Sciatic nerve (tissue), 2 donors: ENCODE measurements at regions of chr10 and their contacts with region 1.

Region 1: DNA sequence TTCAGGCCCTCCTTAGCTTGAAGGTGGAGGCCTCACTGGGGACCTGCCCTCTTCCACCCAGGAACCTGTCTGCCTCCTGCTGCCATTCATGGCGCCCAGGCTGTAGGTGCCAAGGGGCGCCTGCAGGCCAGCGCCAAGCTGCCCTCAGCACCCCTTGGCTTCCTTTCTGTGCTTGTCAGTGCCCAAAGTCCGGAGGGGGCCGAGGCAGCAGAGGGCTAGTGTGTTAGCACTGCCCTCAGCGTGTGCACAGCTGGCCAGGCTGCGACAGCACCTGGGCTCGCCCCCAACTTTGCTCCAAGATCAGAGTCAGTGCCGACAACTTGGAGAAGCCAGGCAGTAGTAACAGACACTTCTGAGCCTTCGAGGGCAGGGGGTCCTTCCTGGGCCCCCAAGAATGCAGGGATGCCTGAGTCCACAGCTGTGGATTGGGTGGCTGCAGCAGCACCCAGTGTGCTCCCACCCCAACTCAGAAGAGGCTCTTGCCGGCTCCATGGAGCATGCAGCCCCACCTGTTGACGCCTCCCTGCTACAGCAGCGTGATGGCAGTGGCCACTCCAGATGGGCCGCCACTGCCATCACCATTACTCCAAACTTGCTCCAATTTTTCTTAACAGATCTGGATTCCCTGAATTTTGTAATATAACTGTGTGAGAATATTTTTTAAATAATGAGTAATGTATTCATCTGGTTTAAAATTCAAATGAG is 41.7 kb downstream of the CACUL1 start:
- DNase-seq: no peak
- ATAC-seq: no peak

Region 2: GRCh38 chr10:118568327-118568848 is 144.7 kb before region 1 on chr10:
- intact Hi-C with region 1: loop called (anchors 10 kb)
- DNase-seq: no peak
- ATAC-seq: peak; percentile 62

Region 3: GRCh38 chr10:118635674-118636402 is 77.2 kb before region 1 on chr10:
- intact Hi-C with region 1: no loop called
- DNase-seq: no peak
- ATAC-seq: no peak